ENCODE measurements at regions of chr10 and their contacts with region 1.

Region 1: GRCh38 chr10:11993834-11994468 is 48.7 kb downstream of the UPF2 start:
- DNase-seq: no peak
- H3K4me3 ChIP-seq: no peak overlapping the region
- H3K4me3 Mint-ChIP-seq: no peak overlapping the region
- H3K27ac Mint-ChIP-seq: no peak overlapping the region
- H3K4me1 ChIP-seq: no peaks in the 10 kb centered on the region
- H3K4me1 Mint-ChIP-seq: peaks cover 7% of the 10 kb centered on the region
- H3K27me3 ChIP-seq: no peaks in the 10 kb centered on the region
- H3K27me3 Mint-ChIP-seq: no peaks in the 10 kb centered on the region
- CTCF ChIP-seq: no peak

Region 2: GRCh38 chr10:12068449-12069269 is 74.7 kb after region 1 on chr10 and contains the start of gene DHTKD1:
- CTCF ChIA-PET with region 1: no interaction called
- POLR2A ChIA-PET with region 1: no interaction called
- intact Hi-C with region 1: loop called (anchors 2 kb)
- DNase-seq: peak; percentile 99 to 100
- H3K4me3 ChIP-seq: peak within 1 kb of the TSS; percentile 77
- H3K4me3 Mint-ChIP-seq: peak within 1 kb of the TSS; percentile 63
- H3K27ac Mint-ChIP-seq: peak within 1 kb of the TSS; percentile 66
- H3K4me1 ChIP-seq: peaks cover 9% of the 10 kb centered on the region; the same call in 1 of the 2 replicates
- H3K4me1 Mint-ChIP-seq: peaks cover 11% of the 10 kb centered on the region
- H3K27me3 ChIP-seq: no peaks in the 10 kb centered on the region
- H3K27me3 Mint-ChIP-seq: no peaks in the 10 kb centered on the region
- CTCF ChIP-seq: peak in 1 of 2 experiments; percentile 61
- total RNA-seq, gene DHTKD1: 57.8 and 61.4 TPM in 2 replicates

Measured in Caco-2 (cell line).